Activated T-helper 2 cell treated with anti-CD3 and anti-CD28 coated beads, Interferon-gamma antibody, Interleukin-2, Interleukin-4, amounts not matched to agents 10 μg/mL and 5 μg/mL and 100 μg/mL, durations not matched to agents 14 hours and 24 hours and 36 hours (primary cell): ENCODE measurements at regions of chr6 and their contacts with region 1.

Region 1: DNA sequence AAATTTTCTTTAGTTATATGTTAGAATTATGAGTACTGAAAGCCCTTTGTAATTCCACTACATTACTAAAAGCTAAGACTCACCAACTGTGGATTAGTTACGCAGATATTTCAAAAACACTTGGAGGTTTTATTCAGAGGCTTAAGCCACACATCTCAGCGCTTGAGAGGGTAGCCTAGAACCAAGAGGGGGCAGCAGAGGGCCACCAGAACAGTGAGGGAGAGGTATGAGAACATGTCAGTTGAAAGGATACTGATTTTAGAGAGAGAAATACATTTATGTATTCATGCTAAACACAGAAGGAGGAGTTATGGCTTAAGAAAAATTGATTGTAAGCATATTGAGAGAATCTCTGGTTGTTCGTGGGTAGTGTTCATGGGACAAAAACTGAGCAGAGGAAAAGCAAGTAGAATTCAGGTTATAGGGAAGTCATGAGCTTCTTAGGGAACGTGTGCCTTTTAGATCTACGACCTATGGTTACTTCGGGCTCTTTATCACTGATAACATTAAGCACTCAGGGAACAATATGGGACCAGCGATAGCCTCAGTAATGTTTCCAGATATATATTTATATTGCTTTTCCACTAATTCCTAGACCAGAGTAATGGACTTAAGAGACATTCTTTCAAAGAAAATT is 20.4 kb upstream of the SERINC1 start:
- DNase-seq: peak; percentile 49
- H3K4me3 Mint-ChIP-seq: no peak overlapping the region
- H3K27ac Mint-ChIP-seq: no peak overlapping the region
- H3K4me1 Mint-ChIP-seq: peaks cover 5% of the 10 kb centered on the region
- H3K27me3 Mint-ChIP-seq: peaks cover 1% of the 10 kb centered on the region

Region 2: DNA sequence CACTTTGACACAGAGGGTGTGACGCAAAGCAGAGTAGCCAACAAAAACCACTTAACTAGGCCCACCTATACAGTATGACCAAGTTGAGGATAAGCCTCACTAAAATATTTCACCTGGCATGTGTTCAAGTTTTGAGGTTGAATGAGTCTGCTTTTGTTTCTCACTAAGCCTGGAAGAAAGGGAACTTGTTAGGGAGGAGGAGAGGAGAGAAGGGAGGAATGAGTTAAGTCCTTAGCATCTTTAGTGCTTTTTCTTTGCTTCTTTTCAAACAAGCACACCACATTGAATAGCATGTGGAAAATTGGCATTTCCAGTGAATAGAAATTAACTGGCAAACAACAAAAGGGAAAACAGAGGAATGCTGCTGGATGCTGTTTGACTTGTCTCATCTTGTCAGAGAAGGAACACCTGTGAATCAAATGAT is 594.7 kb before region 1 on chr6:
- intact Hi-C with region 1: no loop called
- DNase-seq: no peak
- H3K4me3 Mint-ChIP-seq: no peak overlapping the region
- H3K27ac Mint-ChIP-seq: no peak overlapping the region
- H3K4me1 Mint-ChIP-seq: no peaks in the 10 kb centered on the region
- H3K27me3 Mint-ChIP-seq: no peaks in the 10 kb centered on the region

Region 3: DNA sequence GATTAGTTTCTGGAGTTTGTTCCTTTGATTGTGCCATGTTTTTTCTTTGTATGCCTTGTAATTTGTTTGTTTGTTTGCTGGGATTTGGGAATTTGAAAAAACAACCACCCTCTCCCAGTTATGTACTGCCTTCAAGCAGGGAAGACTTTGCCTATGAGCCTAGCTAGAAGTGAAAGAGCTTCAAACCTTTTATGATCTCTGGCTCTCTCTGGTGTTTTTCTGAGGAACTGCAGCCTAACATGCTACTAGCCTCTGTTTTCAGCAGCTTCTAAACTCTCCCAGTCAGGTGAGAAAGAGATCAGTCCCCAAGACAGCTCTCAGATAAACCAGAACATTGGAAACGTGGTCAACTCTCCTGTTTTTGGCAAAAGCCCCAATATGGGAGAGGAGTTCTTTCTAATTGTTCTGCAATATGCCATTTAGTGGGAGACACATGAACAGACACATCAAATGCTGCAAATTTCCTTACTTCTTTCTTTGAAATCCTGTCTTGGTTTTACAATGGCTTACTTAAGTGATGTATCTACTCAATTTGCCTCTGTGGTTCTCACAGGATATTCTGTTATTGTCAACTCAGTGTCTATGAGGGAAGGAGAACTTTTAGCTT is 38.5 kb after region 1 on chr6:
- intact Hi-C with region 1: loop called (anchors 1 kb)
- DNase-seq: peak; percentile 31
- H3K4me3 Mint-ChIP-seq: no peak overlapping the region
- H3K27ac Mint-ChIP-seq: no peak overlapping the region
- H3K4me1 Mint-ChIP-seq: peaks cover 3% of the 10 kb centered on the region
- H3K27me3 Mint-ChIP-seq: peaks cover 23% of the 10 kb centered on the region